Endothelial cell of umbilical vein (primary cell): ENCODE measurements at regions of chr4 and their contacts with region 1.

Region 1: GRCh38 chr4:165355900-165356300 is 22.9 kb upstream of the CPE start:
- DNase-seq: peak; percentile 50
- H3K4me3 ChIP-seq: no peak overlapping the region
- H3K27ac ChIP-seq: no peak overlapping the region
- H3K4me1 ChIP-seq: no peaks in the 10 kb centered on the region
- H3K27me3 ChIP-seq: peaks cover 0 to 7% of the 10 kb centered on the region in 2 experiments
- CTCF ChIP-seq: peak; percentile 40 to 61
- POLR2A ChIP-seq: no peak

Region 2: GRCh38 chr4:165343353-165344191 is 12.3 kb before region 1 on chr4:
- CTCF ChIA-PET with region 1: interaction called, 23 read pairs
- POLR2A ChIA-PET with region 1: no interaction called
- dilution Hi-C with region 1: no loop called
- intact Hi-C with region 1: no loop called
- DNase-seq: peak; percentile 53
- H3K4me3 ChIP-seq: no peak overlapping the region
- H3K27ac ChIP-seq: no peak overlapping the region
- H3K4me1 ChIP-seq: no peaks in the 10 kb centered on the region
- H3K27me3 ChIP-seq: peaks cover 0 to under 1% of the 10 kb centered on the region in 2 experiments
- CTCF ChIP-seq: peak in 1 of 2 donors; percentile 20
- POLR2A ChIP-seq: no peak

Region 3: GRCh38 chr4:165464813-165465381 is 109.0 kb after region 1 on chr4:
- CTCF ChIA-PET with region 1: interaction called, 19 read pairs
- POLR2A ChIA-PET with region 1: no interaction called
- dilution Hi-C with region 1: no loop called
- intact Hi-C with region 1: loop called (anchors 1 kb)
- DNase-seq: peak; percentile 52
- H3K4me3 ChIP-seq: no peak overlapping the region
- H3K27ac ChIP-seq: no peak overlapping the region
- H3K4me1 ChIP-seq: no peaks in the 10 kb centered on the region
- H3K27me3 ChIP-seq: no peaks in the 10 kb centered on the region
- CTCF ChIP-seq: peak; percentile 54 to 61
- POLR2A ChIP-seq: no peak